ENCODE measurements at regions of chrX and their contacts with region 1.

Region 1: DNA sequence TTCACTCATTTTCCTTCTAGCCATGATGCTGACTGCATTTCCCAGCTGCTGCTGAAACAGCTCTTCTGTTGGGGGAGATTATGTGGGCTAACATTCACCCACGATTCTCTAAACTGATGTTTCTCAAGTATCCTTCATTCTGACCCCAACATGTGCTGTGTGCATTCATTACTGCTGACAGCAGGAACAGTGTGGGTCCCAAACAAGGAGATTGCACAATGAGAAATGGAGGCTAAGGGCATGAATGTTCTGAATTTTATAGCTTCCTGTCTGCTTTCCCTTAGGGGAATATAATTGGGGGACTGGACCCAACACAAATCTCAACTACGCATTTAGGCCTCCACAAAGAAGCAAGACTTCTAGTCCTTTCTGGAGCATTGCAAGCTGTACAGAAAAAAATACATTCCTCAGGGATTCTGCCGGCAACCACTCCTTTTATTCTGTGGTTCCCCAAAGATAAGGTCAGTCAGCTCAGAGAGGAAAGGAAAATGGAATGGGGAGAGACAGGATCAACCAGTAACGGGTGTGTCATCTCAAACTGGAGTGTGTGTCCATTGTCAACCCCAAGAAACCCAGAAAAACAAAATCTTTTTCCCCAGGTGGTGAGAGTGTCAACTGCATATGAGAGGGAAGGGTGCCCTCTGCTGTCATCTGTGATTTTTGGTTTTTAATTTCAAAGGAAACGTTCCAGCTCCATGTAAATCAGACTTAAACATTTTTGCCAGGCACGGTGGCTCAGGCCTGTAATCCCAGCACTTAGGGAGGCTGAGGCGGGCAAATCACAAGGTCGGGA is 81.5 kb upstream of the EGFL6 start:
- DNase-seq: peak in 1 of 2 donors; percentile 69
- H3K4me3 ChIP-seq: no peak overlapping the region
- H3K27ac ChIP-seq: peak overlapping the region; percentile 71 to 82
- H3K4me1 ChIP-seq: peaks cover 0 to 10% of the 10 kb centered on the region in 2 donors
- H3K27me3 ChIP-seq: no peaks in the 10 kb centered on the region
- CTCF ChIP-seq: peak; percentile 37 to 86 (median 70)

Region 2: DNA sequence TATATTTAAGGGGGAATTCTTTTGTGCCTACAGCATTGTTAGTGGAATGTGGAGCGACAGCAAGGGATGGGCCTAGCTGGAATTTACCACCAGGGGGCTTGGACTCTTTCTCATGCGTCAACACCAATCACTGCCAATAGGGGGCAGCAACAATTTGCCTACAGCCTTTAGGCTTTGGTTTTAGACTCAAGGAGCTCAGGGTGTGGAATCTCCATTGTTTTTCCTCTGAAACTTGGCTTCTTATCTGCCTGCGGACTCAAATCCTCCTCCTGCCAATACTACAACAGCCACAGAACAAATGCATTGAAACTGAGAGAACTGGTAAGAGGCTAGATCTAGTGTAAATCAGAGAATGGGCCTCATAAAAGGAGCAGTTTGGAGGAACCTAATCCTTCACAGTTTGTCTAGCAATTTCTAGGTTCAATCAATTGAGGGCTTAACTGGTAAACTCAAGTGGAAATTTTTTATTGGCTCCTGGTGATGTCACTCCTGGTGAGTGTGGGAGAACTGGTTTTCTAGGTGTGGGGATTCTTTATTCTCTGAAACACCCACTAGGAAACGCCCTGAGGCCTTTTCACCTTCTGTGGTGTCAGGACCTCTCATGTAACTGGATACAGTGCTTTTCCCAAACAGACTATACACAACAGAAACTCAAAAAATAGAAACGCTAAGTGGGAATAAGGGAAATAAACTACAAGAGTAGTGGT is 540.9 kb before region 1 on chrX:
- intact Hi-C with region 1: loop called (anchors 2 kb)
- DNase-seq: peak in 1 of 2 donors; percentile 86
- H3K4me3 ChIP-seq: no peak overlapping the region
- H3K27ac ChIP-seq: peak overlapping the region; percentile 6 to 52
- H3K4me1 ChIP-seq: peaks cover 0 to 6% of the 10 kb centered on the region in 2 donors
- H3K27me3 ChIP-seq: no peaks in the 10 kb centered on the region
- CTCF ChIP-seq: peak; percentile 72 to 89 (median 78)

Region 3: DNA sequence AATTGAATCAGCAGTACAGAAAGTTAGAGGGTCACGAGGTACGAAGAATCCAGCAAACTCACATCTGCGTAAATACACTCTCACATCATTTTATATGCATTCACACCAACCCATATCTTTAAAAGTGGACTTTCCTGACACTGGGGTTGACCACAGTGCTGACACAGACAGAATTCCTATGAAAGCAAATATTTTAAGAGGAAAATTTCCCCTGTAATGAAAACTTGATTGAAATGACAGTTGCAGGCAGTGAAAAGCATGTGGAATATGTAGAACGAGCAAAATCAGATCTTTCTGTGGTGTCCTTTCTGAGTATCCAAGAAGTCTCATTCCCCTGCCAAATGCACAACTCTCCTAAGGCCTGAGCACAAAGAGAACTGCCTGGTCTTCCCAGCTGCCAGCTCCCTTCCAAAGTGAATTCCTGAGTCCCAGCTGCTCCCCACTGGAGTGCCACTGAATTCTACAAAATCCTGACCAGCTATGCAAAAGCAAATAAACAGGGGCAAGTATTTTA is 393.0 kb before region 1 on chrX:
- intact Hi-C with region 1: loop called (anchors 5 kb)
- DNase-seq: no peak
- H3K4me3 ChIP-seq: no peak overlapping the region
- H3K27ac ChIP-seq: peak overlapping the region; percentile 48 to 58
- H3K4me1 ChIP-seq: no peaks in the 10 kb centered on the region
- H3K27me3 ChIP-seq: no peaks in the 10 kb centered on the region
- CTCF ChIP-seq: no peak

Region 4: GRCh38 chrX:13110433-13111324 is 377.2 kb before region 1 on chrX:
- intact Hi-C with region 1: loop called (anchors 5 kb)
- DNase-seq: peak in 1 of 2 donors; percentile 83
- H3K4me3 ChIP-seq: no peak overlapping the region
- H3K27ac ChIP-seq: peak overlapping the region; percentile 65 to 76
- H3K4me1 ChIP-seq: peaks cover 0 to 2% of the 10 kb centered on the region in 2 donors
- H3K27me3 ChIP-seq: no peaks in the 10 kb centered on the region
- CTCF ChIP-seq: no peak

Region 5: GRCh38 chrX:13376857-13377549 is 110.9 kb before region 1 on chrX:
- intact Hi-C with region 1: no loop called
- DNase-seq: no peak
- H3K4me3 ChIP-seq: no peak overlapping the region
- H3K27ac ChIP-seq: peak overlapping the region; percentile 20 to 48
- H3K4me1 ChIP-seq: no peaks in the 10 kb centered on the region
- H3K27me3 ChIP-seq: no peaks in the 10 kb centered on the region
- CTCF ChIP-seq: no peak

Region 6: DNA sequence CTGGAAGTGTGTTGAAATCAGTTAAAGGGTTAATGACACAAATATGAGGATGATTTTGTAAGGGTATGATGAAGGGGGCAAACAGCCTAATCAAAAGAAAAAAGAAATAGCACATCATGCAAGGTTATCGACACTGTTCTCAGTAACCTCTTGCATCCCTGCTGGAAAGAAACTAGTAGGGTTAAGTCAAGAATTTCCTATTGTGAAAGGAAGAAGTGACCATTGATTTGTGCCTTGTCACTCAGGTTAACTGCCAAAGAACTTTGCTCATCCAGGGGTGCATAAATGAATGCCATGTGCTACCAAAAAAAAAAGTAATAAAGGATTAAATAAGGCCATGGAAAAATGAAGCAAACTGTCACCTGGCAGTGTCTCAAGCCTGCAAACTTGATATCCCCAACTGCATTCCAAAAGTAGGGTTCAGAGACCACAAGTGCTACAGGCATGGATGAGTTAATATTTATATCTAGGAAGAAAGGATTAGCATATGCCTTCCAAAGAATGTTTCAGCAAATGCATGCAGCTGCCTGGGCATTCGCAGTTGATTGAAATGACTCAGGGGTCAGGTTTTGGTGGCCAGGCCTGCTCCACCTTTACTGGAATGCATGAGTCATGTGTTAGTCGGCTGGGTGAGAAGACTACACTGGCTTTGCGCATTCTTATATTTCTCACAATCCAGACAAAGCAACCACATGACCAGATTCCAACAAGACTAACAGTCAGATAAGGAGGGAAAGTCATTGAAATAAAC is 89.7 kb before region 1 on chrX:
- intact Hi-C with region 1: loop called (anchors 5 kb)
- DNase-seq: peak; percentile 26 to 86
- H3K4me3 ChIP-seq: no peak overlapping the region
- H3K27ac ChIP-seq: peak overlapping the region; percentile 59 to 65
- H3K4me1 ChIP-seq: peaks cover 0 to 7% of the 10 kb centered on the region in 2 donors
- H3K27me3 ChIP-seq: no peaks in the 10 kb centered on the region
- CTCF ChIP-seq: no peak

Region 7: DNA sequence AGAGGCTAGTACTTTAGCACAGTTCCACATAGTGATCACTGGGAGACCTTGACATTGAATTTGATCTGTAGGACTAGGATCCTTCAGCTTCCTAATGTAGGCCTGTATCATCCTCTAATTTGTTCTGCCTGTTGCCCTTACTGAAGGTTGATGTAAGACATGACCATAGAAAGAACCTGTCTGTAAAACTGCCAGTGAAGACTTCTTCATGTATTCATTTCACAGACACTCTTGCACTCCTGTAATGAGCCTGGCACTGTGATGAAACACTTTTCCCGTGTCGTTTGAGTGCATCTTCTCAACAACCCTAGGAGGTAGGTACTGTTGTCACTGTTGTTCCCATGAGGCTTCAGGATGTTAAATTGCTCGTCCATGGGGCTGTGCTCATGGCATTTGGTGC is 215.7 kb after region 1 on chrX:
- intact Hi-C with region 1: no loop called
- DNase-seq: no peak
- H3K4me3 ChIP-seq: no peak overlapping the region
- H3K27ac ChIP-seq: peak overlapping the region in 1 of 2 donors; percentile 29
- H3K4me1 ChIP-seq: peaks cover 0 to 12% of the 10 kb centered on the region in 2 donors
- H3K27me3 ChIP-seq: no peaks in the 10 kb centered on the region
- CTCF ChIP-seq: no peak

Region 8: GRCh38 chrX:13898083-13898482 is 410.2 kb after region 1 on chrX:
- intact Hi-C with region 1: loop called (anchors 10 kb)
- DNase-seq: peak in 1 of 2 donors; percentile 69
- H3K4me3 ChIP-seq: no peak overlapping the region
- H3K27ac ChIP-seq: peak overlapping the region in 1 of 2 donors; percentile 23
- H3K4me1 ChIP-seq: peaks cover 0 to 33% of the 10 kb centered on the region in 2 donors
- H3K27me3 ChIP-seq: no peaks in the 10 kb centered on the region
- CTCF ChIP-seq: peak in 2 of 3 experiments; percentile 29 to 32

Region 9: GRCh38 chrX:13923845-13924244 is 435.9 kb after region 1 on chrX:
- intact Hi-C with region 1: no loop called
- DNase-seq: no peak
- H3K4me3 ChIP-seq: no peak overlapping the region
- H3K27ac ChIP-seq: no peak overlapping the region
- H3K4me1 ChIP-seq: no peaks in the 10 kb centered on the region
- H3K27me3 ChIP-seq: no peaks in the 10 kb centered on the region
- CTCF ChIP-seq: no peak

Measured in ascending aorta (tissue), 2 donors.